Colonic mucosa (tissue), 4 donors: ENCODE measurements at regions of chr4 and their contacts with region 1.

Region 1: GRCh38 chr4:70901984-70902576 is at the start of gene MOB1B:
- DNase-seq: peak; percentile 89
- H3K4me3 ChIP-seq: peak within 1 kb of the TSS; percentile 76
- H3K27ac ChIP-seq: peak within 1 kb of the TSS; percentile 76
- H3K4me1 ChIP-seq: no peaks in the 10 kb centered on the region
- H3K27me3 ChIP-seq: no peaks in the 10 kb centered on the region
- CTCF ChIP-seq: peak; percentile 18
- total RNA-seq, gene MOB1B: 11.0 to 15.6 TPM

Region 2: GRCh38 chr4:70337886-70338420 is 564.1 kb before region 1 on chr4:
- intact Hi-C with region 1: no loop called
- DNase-seq: no peak
- H3K4me3 ChIP-seq: no peak overlapping the region
- H3K27ac ChIP-seq: no peak overlapping the region
- H3K4me1 ChIP-seq: no peaks in the 10 kb centered on the region
- H3K27me3 ChIP-seq: no peaks in the 10 kb centered on the region
- CTCF ChIP-seq: no peak

Region 3: GRCh38 chr4:70993181-70994068 is 91.3 kb after region 1 on chr4 and contains the start of gene DCK:
- intact Hi-C with region 1: loop called (anchors 10 kb)
- DNase-seq: peak; percentile 94
- H3K4me3 ChIP-seq: peak within 1 kb of the TSS; percentile 83
- H3K27ac ChIP-seq: peak within 1 kb of the TSS; percentile 83
- H3K4me1 ChIP-seq: no peaks in the 10 kb centered on the region
- H3K27me3 ChIP-seq: no peaks in the 10 kb centered on the region
- CTCF ChIP-seq: no peak
- total RNA-seq, gene DCK: 15.0 to 19.1 TPM